Calu3 (cell line): ENCODE measurements at regions of chr10 and their contacts with region 1.

Region 1: GRCh38 chr10:122051251-122051996 is 62.5 kb downstream of the TACC2 start:
- DNase-seq: peak; percentile 60
- H3K4me3 Mint-ChIP-seq: no peak overlapping the region
- H3K27ac Mint-ChIP-seq: no peak overlapping the region
- H3K4me1 Mint-ChIP-seq: peaks cover 2% of the 10 kb centered on the region
- H3K27me3 Mint-ChIP-seq: no peaks in the 10 kb centered on the region
- CTCF ChIP-seq: peak; percentile 45

Region 2: DNA sequence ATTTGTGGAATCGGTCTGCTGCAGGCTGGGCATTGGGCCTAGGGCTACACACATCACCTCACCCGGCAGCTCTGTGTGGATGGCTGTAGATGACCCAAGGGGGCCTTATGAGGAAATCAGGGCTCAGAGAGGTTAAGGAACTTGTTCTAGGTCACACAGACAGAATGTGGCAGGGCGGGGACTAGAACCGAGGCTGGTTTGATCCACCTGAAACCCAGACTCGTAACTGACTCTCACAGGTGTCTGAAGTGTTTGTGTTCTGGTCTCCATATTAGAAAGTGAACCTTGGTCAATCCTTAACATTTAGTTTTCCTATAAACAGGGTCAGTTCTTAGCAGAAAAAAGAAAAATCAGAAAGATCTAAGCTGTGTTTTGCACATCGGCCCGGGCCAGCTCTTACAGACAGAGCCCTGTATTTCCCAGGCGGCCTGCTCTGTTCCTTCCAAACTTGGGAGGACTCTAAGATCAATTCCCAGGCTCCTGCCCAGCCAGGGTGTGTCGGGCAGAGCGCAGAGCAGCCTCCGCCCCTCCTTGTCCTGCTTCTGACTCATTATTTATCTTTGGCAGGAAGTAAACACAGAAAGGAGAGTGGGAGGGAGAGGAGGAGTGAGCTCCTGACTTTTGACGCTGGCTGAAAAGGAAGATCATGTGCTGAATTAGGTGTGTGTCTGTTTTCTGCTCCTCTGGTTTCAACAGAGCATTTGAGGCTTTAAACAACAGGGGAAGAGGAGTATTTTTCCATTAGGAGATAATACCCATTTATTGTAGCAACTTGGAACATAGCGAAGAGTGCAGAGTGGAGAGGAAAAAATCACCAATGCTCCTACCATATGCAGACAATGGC is 11.6 kb after region 1 on chr10:
- CTCF ChIA-PET with region 1: interaction called, 4 read pairs
- intact Hi-C with region 1: loop called (anchors 1 kb)
- DNase-seq: peak; percentile 79
- H3K4me3 Mint-ChIP-seq: peak overlapping the region; percentile 29
- H3K27ac Mint-ChIP-seq: peak overlapping the region; percentile 88
- H3K4me1 Mint-ChIP-seq: peaks cover 30% of the 10 kb centered on the region
- H3K27me3 Mint-ChIP-seq: no peaks in the 10 kb centered on the region
- CTCF ChIP-seq: no peak

Region 3: GRCh38 chr10:122072491-122072890 is 21.1 kb after region 1 on chr10:
- CTCF ChIA-PET with region 1: no interaction called
- intact Hi-C with region 1: loop called (anchors 1 kb)
- DNase-seq: no peak
- H3K4me3 Mint-ChIP-seq: no peak overlapping the region
- H3K27ac Mint-ChIP-seq: no peak overlapping the region
- H3K4me1 Mint-ChIP-seq: peaks cover 10% of the 10 kb centered on the region
- H3K27me3 Mint-ChIP-seq: no peaks in the 10 kb centered on the region
- CTCF ChIP-seq: no peak

Region 4: DNA sequence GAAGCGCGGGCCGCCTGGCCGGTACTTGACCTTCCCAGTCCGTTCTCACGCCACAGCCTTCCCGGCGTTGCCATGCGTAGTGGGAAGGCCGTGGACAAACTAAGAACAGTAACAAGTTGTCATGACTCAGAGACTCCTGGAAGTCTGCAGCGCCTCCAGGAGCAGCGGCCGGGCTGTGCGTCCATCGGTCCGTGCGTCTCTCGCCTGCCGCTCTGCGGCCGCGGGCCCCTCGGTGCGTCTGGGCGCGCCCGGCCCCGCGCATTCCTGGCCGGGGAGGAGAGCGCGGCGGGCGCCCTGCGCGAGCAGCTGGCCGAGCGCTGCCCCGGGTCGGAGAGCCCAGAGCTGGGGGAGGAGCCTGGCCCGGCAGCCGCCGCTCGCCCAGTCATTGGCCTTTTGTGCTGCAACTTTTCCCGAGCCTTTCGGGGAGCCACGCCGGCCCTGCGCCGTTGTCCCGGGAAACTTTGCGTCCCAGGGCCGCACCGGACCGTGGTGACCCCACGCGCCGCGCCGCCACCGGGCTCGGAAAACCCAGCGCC is 61.3 kb after region 1 on chr10:
- CTCF ChIA-PET with region 1: interaction called, 14 read pairs
- intact Hi-C with region 1: loop called (anchors 2 kb)
- DNase-seq: peak; percentile 80
- H3K4me3 Mint-ChIP-seq: peak overlapping the region; percentile 84
- H3K27ac Mint-ChIP-seq: peak overlapping the region; percentile 39
- H3K4me1 Mint-ChIP-seq: peaks cover 28% of the 10 kb centered on the region
- H3K27me3 Mint-ChIP-seq: no peaks in the 10 kb centered on the region
- CTCF ChIP-seq: no peak

Region 5: GRCh38 chr10:122515588-122516231 is 464.3 kb after region 1 on chr10:
- CTCF ChIA-PET with region 1: no interaction called
- intact Hi-C with region 1: no loop called
- DNase-seq: no peak
- H3K4me3 Mint-ChIP-seq: no peak overlapping the region
- H3K27ac Mint-ChIP-seq: no peak overlapping the region
- H3K4me1 Mint-ChIP-seq: no peaks in the 10 kb centered on the region
- H3K27me3 Mint-ChIP-seq: peaks cover 18% of the 10 kb centered on the region
- CTCF ChIP-seq: no peak